Activated naive CD4-positive, alpha-beta T cell treated with anti-CD3 and anti-CD28 coated beads for 36 hours (primary cell): ENCODE measurements at regions of chr15 and their contacts with region 1.

Region 1: DNA sequence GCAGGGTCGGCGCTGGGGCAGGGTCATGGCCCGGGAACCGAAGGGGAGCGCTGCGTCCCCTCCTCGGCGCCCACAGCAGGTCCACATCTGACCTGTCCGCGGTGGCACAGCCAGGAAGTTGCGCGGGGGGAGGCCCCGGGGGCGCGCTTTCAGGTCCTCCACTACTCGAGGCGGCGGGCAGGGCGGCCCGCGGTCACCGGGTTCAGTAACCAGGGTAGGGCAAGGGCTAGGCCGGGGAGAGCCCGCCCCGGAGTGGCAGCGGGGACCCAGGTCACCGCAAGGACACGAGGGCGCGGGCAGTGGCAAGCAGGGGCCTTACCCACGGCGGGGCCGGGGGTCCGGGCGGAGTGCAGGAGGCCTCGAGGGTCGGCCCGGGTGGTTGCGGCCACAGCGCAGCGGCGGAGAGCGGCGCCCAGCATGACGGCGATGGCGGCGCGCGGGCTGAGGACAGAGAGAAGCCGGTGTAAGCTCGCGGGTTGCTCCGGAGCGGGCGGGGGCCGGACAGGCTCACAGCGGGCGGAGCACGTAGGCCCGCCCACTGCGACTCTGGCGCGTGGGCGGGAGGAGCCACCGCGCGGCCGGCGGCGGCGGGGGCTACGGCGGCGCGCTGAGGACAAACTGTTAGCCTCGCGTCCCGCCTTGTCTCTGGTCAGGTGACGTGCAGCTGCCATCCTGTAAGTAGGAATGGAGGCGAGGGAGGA is at the start of gene COX5A:
- DNase-seq: peak; percentile 95
- H3K4me3 Mint-ChIP-seq: peak within 1 kb of the TSS; percentile 90
- H3K27ac Mint-ChIP-seq: peak within 1 kb of the TSS; percentile 89
- H3K4me1 Mint-ChIP-seq: peaks cover 33% of the 10 kb centered on the region
- H3K27me3 Mint-ChIP-seq: no peaks in the 10 kb centered on the region
- total RNA-seq, gene COX5A: 346 to 348 TPM

Region 2: GRCh38 chr15:74781431-74782258 is 156.1 kb before region 1 on chr15 and contains the start of gene CSK:
- CTCF ChIA-PET with region 1: no interaction called
- intact Hi-C with region 1: loop called (anchors 2 kb)
- DNase-seq: peak; percentile 74
- H3K4me3 Mint-ChIP-seq: peak within 1 kb of the TSS; percentile 93
- H3K27ac Mint-ChIP-seq: peak within 1 kb of the TSS; percentile 99
- H3K4me1 Mint-ChIP-seq: peaks cover 46% of the 10 kb centered on the region
- H3K27me3 Mint-ChIP-seq: no peaks in the 10 kb centered on the region
- total RNA-seq, gene CSK: 272 to 282 TPM

Region 3: DNA sequence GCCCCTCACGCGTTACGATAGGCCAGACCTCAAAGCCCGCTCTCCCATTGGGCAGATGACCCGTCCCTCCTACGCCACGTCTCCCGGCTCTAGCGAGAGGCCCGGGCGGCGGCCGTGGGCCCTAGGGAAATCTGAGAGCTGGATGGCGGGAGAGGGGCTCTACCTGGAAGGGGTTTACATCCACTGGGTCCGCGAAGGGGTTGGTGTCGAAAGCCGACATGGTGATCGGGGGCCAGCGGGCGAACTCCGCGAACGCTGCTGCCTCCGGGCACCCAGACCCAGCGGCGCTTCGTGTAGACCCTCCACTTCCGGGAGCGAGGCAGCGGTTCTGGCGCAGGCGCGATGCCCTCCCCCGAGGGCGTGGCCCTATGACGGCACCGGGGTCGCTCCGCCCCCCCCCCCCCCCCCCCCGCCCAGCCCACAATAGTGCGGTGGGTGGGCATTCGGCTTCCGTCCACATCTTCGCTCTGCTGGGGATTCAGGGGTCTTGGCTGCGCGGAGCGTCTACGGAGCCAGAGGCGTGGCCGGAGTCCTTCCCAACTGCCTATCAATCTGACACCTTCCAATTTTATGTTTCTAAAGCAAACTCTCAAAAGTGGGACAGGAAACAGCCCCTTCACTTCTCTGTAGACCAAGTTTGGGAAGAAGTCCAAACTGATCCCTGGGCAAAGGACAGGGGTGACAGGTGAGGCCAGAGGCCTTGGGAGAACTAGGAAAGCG is 64.5 kb before region 1 on chr15 and contains the start of gene SCAMP2:
- CTCF ChIA-PET with region 1: no interaction called
- intact Hi-C with region 1: loop called (anchors 1 kb)
- DNase-seq: peak; percentile 92
- H3K4me3 Mint-ChIP-seq: peak within 1 kb of the TSS; percentile 98
- H3K27ac Mint-ChIP-seq: peak within 1 kb of the TSS; percentile 92
- H3K4me1 Mint-ChIP-seq: peaks cover 42% of the 10 kb centered on the region
- H3K27me3 Mint-ChIP-seq: no peaks in the 10 kb centered on the region
- total RNA-seq, gene SCAMP2: 60.6 TPM

Region 4: DNA sequence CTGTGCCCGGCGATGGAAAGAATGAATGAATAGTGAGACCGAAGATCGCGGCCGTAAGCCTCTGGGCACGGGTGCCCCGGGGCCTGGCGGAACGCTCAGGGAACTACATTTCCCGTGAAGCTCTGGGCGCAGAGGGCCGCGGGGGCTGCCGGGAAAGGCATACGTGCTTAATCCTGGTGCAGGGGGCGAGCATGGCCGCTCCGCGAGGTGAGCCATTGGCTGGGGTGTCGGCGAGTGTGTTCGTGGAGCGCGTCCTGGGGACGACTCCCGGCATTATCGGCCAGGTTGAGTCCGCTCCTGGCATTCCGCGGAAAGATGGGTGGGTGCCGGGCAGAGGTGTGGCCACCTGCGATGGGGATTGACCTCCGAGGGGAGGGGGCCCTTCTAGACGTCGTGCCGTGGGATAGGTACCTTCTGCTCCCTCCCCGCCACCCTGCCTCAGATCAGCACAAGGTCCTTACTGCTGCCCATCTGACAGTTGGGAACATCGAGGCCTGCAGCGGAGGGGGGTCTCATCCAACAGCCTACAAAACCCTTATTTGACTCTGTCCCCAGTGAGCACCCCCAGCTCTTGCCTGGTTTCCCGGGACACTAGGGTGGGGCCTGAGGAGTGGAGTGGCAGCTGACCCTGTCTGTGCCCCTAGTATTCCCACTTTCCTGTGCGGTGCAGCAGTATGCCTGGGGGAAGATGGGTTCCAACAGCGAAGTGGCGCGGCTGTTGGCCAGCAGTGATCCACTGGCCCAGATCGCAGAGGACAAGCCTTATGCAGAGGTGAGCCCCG is 47.7 kb before region 1 on chr15 and contains the start of gene MPI:
- CTCF ChIA-PET with region 1: no interaction called
- intact Hi-C with region 1: loop called (anchors 1 kb)
- DNase-seq: peak; percentile 93
- H3K4me3 Mint-ChIP-seq: peak within 1 kb of the TSS; percentile 94
- H3K27ac Mint-ChIP-seq: peak within 1 kb of the TSS; percentile 92
- H3K4me1 Mint-ChIP-seq: peaks cover 43% of the 10 kb centered on the region
- H3K27me3 Mint-ChIP-seq: no peaks in the 10 kb centered on the region
- total RNA-seq, gene MPI: 55.2 to 56.1 TPM

Region 5: GRCh38 chr15:74956648-74957300 is 19.0 kb after region 1 on chr15 and contains the start of gene RPP25:
- CTCF ChIA-PET with region 1: interaction called, 6 read pairs
- intact Hi-C with region 1: loop called (anchors 1 kb)
- DNase-seq: peak; percentile 65
- H3K4me3 Mint-ChIP-seq: peak within 1 kb of the TSS; percentile 69
- H3K27ac Mint-ChIP-seq: no peak within 1 kb of the TSS
- H3K4me1 Mint-ChIP-seq: peaks cover 44% of the 10 kb centered on the region
- H3K27me3 Mint-ChIP-seq: peaks cover 28% of the 10 kb centered on the region
- total RNA-seq, gene RPP25: 3.5 to 3.7 TPM

Region 6: GRCh38 chr15:75023181-75023871 is 85.6 kb after region 1 on chr15 and contains the start of gene PPCDC:
- CTCF ChIA-PET with region 1: no interaction called
- intact Hi-C with region 1: loop called (anchors 1 kb)
- DNase-seq: peak; percentile 98
- H3K4me3 Mint-ChIP-seq: peak within 1 kb of the TSS; percentile 90
- H3K27ac Mint-ChIP-seq: peak within 1 kb of the TSS; percentile 90
- H3K4me1 Mint-ChIP-seq: peaks cover 16% of the 10 kb centered on the region
- H3K27me3 Mint-ChIP-seq: no peaks in the 10 kb centered on the region
- total RNA-seq, gene PPCDC: 17.5 to 18.0 TPM